H1 (cell line): ENCODE measurements at regions of chr19 and their contacts with region 1.

Region 1: GRCh38 chr19:18304458-18305310 is 18.2 kb downstream of the LSM4 start:
- DNase-seq: no peak
- H3K4me3 ChIP-seq: peak overlapping the region in 3 of 4 experiments; percentile 14 to 49 (median 34); a peak in 5 of 8 replicates
- H3K27ac ChIP-seq: peak overlapping the region; percentile 9; the same call in 1 of the 2 replicates
- H3K4me1 ChIP-seq: peaks cover 0 to 25% (median 10%) of the 10 kb centered on the region in 4 experiments; a peak in 6 of 7 replicates
- H3K27me3 ChIP-seq: no peaks in the 10 kb centered on the region
- CTCF ChIP-seq: no peak
- EP300 ChIP-seq: no peak
- POLR2A ChIP-seq: no peak
- RAD21 ChIP-seq: no peak

Region 2: GRCh38 chr19:18291590-18292461 is 12.9 kb before region 1 on chr19:
- CTCF ChIA-PET with region 1: interaction called, 15 read pairs
- POLR2A ChIA-PET with region 1: interaction called, 72 read pairs
- DNase-seq: peak in 1 of 2 experiments; percentile 88
- H3K4me3 ChIP-seq: peak overlapping the region; percentile 55 to 75 (median 66)
- H3K27ac ChIP-seq: peak overlapping the region; percentile 81
- H3K4me1 ChIP-seq: peaks cover 4 to 35% (median 27%) of the 10 kb centered on the region in 4 experiments
- H3K27me3 ChIP-seq: peaks cover 0 to 5% (median 0%) of the 10 kb centered on the region in 4 experiments; a peak in 2 of 7 replicates
- CTCF ChIP-seq: no peak
- EP300 ChIP-seq: no peak
- POLR2A ChIP-seq: no peak; a peak in 1 of 3 replicates
- RAD21 ChIP-seq: no peak